Left cardiac atrium (tissue), 4 donors: ENCODE measurements at regions of chr12 and their contacts with region 1.

Region 1: DNA sequence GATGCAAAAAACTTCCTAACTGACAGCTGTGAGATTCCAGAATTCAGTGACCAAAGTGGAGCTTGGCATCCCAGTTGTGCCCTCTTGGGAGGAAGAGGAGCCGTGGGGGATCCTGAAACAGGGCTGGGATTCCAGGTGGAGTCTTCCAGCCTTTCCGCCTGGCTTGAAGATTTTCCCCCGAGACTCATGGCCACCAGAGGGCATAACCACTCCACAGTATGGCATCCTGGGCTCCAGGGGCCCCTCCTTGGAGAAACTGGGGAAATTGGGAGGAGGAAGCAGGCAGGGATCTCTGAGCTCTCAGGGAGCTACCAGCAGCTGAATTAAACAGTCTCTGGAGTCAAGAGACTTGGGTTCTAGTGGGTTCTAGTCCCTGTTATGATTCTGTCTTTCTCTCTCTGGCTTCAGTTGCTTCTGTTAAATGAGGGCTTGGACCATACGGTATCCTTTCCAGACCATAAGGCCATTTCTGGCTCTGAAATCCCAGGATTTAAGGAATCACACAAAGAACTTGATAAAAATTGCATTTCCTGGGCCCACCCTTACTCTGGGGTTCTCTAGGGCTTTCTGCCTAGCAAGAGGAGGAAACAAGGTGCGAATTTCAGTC is 2.6 kb upstream of the TAMALIN start:
- DNase-seq: peak; percentile 68
- ATAC-seq: peak in 1 of 2 donors; percentile 3

Region 2: DNA sequence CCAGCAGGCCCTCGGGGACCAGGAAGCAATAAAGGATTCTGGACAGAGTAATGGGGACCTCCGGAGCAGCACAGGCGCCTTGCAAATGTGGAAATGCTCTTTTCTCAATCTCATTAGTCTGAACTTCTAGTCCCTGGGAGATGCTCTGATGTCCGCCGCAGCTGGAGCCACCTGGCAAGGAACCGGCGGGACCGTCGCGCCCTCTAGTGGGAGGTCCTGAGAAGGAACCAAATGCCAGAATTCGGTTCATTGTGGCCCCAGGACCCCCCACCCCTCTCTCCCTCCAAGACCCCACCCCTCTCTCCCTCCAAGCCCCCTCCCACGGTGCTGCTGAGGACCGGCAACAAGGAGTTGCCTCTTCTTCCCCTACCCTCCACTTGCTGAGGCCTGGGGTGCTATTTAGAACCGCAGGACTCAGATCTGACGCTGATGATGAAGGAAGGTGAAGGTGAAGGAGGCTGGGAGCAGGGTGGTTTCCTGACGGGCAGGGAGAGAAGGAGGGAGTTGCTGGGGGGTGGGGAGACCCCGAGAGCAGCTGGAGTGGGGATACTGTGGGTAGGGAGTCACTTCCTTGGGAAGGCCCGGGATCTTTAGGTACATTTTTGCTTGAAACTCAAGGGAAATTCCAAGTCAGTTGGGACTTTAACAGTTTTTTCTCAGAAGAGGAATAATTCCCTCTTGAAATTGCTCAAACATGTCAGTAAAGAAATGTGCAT is 117.8 kb after region 1 on chr12:
- intact Hi-C with region 1: loop called in 1 of 2 experiments (anchors 10 kb)
- DNase-seq: peak; percentile 72
- ATAC-seq: peak; percentile 28 to 45